Naive thymus-derived CD4-positive, alpha-beta T cell (primary cell): ENCODE measurements at regions of chr10 and their contacts with region 1.

Region 1: GRCh38 chr10:62816331-62817120 is at the start of gene EGR2:
- DNase-seq: peak; percentile 92 to 99 (median 98)
- ATAC-seq: peak; percentile 88
- H3K4me3 ChIP-seq: peak within 1 kb of the TSS; percentile 69
- H3K4me3 Mint-ChIP-seq: peak within 1 kb of the TSS; percentile 89 to 100 (median 98)
- H3K27ac ChIP-seq: peak within 1 kb of the TSS; percentile 76
- H3K27ac Mint-ChIP-seq: peak within 1 kb of the TSS; percentile 86 to 99 (median 95)
- H3K4me1 ChIP-seq: peaks cover 17 to 23% of the 10 kb centered on the region in 2 donors
- H3K4me1 Mint-ChIP-seq: peaks cover 36 to 62% (median 49%) of the 10 kb centered on the region in 7 donors
- H3K27me3 ChIP-seq: peaks cover 3 to 7% of the 10 kb centered on the region in 2 donors
- H3K27me3 Mint-ChIP-seq: peaks cover 26 to 74% (median 31%) of the 10 kb centered on the region in 5 donors
- total RNA-seq, gene EGR2: 0.46 to 14.2 (median 2.7) TPM

Region 2: GRCh38 chr10:61992671-61993668 is 823.6 kb before region 1 on chr10:
- CTCF ChIA-PET with region 1: no interaction called
- POLR2A ChIA-PET with region 1: no interaction called
- intact Hi-C with region 1: loop called in 1 of 2 experiments (anchors 1 kb)
- DNase-seq: peak in 8 of 9 donors; percentile 39 to 85 (median 72)
- ATAC-seq: peak; percentile 90
- H3K4me3 ChIP-seq: peak overlapping the region; percentile 28
- H3K4me3 Mint-ChIP-seq: peak overlapping the region in 9 of 10 donors; percentile 61 to 89 (median 64)
- H3K27ac ChIP-seq: peak overlapping the region; percentile 63
- H3K27ac Mint-ChIP-seq: peak overlapping the region; percentile 82 to 96 (median 93)
- H3K4me1 ChIP-seq: peaks cover 33 to 37% of the 10 kb centered on the region in 2 donors
- H3K4me1 Mint-ChIP-seq: peaks cover 28 to 81% (median 70%) of the 10 kb centered on the region in 7 donors
- H3K27me3 ChIP-seq: no peaks in the 10 kb centered on the region
- H3K27me3 Mint-ChIP-seq: no peaks in the 10 kb centered on the region

Region 3: GRCh38 chr10:62492012-62492869 is 324.3 kb before region 1 on chr10:
- CTCF ChIA-PET with region 1: interaction called, 5 read pairs
- POLR2A ChIA-PET with region 1: interaction called, 7 read pairs
- intact Hi-C with region 1: loop called in 1 of 2 experiments (anchors 1 kb)
- DNase-seq: peak in 7 of 9 donors; percentile 14 to 53 (median 40)
- ATAC-seq: peak; percentile 54
- H3K4me3 ChIP-seq: no peak overlapping the region
- H3K4me3 Mint-ChIP-seq: no peak overlapping the region
- H3K27ac ChIP-seq: no peak overlapping the region
- H3K27ac Mint-ChIP-seq: no peak overlapping the region
- H3K4me1 ChIP-seq: no peaks in the 10 kb centered on the region
- H3K4me1 Mint-ChIP-seq: peaks cover 0 to 2% (median 0%) of the 10 kb centered on the region in 7 donors
- H3K27me3 ChIP-seq: no peaks in the 10 kb centered on the region
- H3K27me3 Mint-ChIP-seq: peaks cover 0 to 29% (median 4%) of the 10 kb centered on the region in 5 donors

Region 4: DNA sequence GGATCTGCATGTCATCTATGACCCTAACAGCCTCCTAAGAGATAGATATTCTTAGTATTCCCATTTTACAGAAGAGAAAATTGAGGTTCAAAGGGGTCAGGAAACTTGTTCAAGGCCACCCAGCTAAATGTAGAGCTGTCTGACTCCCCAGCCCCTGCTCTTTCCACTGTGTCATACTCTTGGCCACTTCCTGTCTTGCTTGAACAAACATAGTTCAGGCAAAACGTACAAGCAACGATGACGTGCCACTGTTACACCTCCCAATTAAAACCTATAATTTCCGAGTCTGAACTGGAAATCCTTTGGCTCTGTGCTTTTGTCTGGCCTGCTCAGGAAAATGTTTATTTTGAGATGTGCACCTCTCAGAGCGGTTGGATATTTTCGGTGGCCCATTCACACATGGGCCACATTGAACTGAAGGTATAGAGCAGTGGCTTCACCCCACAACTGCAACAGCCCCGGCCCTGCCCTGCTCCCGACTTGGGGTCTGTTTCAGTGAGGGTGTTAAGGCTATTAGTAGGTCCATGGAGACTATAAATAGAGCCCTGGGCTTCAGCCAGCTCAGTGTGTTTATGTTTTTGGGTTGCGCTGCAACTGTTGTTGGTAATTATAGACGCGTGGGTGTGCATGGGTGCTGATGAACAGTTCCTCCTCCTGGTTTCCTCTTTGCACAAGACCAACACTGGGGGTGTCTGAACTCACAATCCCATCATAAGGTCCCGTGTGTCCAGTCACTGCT is 184.3 kb before region 1 on chr10:
- CTCF ChIA-PET with region 1: interaction called, 21 read pairs
- POLR2A ChIA-PET with region 1: interaction called, 43 read pairs
- intact Hi-C with region 1: loop called (anchors 1 kb)
- DNase-seq: peak in 8 of 9 donors; percentile 45 to 69 (median 54)
- ATAC-seq: peak; percentile 82
- H3K4me3 ChIP-seq: peak overlapping the region; percentile 19
- H3K4me3 Mint-ChIP-seq: peak overlapping the region in 4 of 10 donors; percentile 19 to 67 (median 45)
- H3K27ac ChIP-seq: no peak overlapping the region
- H3K27ac Mint-ChIP-seq: peak overlapping the region; percentile 3 to 89 (median 54)
- H3K4me1 ChIP-seq: peaks cover 15 to 29% of the 10 kb centered on the region in 2 donors
- H3K4me1 Mint-ChIP-seq: peaks cover 8 to 40% (median 15%) of the 10 kb centered on the region in 7 donors
- H3K27me3 ChIP-seq: no peaks in the 10 kb centered on the region
- H3K27me3 Mint-ChIP-seq: no peaks in the 10 kb centered on the region

Region 5: DNA sequence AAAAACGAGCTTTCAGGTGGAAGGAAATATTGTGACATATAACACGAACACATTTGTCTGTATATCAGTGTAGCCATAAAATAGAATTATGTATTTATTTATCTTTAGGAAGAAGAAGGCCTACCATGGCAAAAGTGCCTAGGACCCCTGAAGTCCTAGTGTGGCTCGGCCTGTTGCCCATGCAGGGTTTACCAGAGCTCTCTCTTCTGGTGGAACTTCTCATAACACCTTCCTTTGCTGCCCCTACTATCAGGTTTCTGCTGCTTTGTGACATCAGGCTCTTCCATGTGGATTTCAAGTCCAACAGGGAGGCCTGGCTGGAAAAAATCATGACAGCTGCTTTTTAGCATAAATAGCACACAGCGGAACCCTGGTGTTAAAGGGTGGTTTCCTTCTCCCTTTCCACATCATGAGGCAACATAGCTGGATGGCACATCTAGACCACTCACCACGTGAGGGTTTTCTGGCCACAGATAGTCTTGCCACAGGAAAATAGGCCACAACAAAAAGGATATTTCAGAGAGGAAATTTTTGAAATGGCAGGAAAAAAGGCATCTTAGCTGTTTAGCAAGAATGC is 56.8 kb before region 1 on chr10:
- CTCF ChIA-PET with region 1: no interaction called
- POLR2A ChIA-PET with region 1: no interaction called
- intact Hi-C with region 1: loop called in 1 of 2 experiments (anchors 1 kb)
- DNase-seq: no peak
- ATAC-seq: peak; percentile 49
- H3K4me3 ChIP-seq: no peak overlapping the region
- H3K4me3 Mint-ChIP-seq: no peak overlapping the region
- H3K27ac ChIP-seq: no peak overlapping the region
- H3K27ac Mint-ChIP-seq: no peak overlapping the region
- H3K4me1 ChIP-seq: peaks cover 15 to 20% of the 10 kb centered on the region in 2 donors
- H3K4me1 Mint-ChIP-seq: peaks cover 17 to 27% (median 20%) of the 10 kb centered on the region in 7 donors
- H3K27me3 ChIP-seq: no peaks in the 10 kb centered on the region
- H3K27me3 Mint-ChIP-seq: peaks cover 0 to 3% (median 0%) of the 10 kb centered on the region in 5 donors

Region 6: DNA sequence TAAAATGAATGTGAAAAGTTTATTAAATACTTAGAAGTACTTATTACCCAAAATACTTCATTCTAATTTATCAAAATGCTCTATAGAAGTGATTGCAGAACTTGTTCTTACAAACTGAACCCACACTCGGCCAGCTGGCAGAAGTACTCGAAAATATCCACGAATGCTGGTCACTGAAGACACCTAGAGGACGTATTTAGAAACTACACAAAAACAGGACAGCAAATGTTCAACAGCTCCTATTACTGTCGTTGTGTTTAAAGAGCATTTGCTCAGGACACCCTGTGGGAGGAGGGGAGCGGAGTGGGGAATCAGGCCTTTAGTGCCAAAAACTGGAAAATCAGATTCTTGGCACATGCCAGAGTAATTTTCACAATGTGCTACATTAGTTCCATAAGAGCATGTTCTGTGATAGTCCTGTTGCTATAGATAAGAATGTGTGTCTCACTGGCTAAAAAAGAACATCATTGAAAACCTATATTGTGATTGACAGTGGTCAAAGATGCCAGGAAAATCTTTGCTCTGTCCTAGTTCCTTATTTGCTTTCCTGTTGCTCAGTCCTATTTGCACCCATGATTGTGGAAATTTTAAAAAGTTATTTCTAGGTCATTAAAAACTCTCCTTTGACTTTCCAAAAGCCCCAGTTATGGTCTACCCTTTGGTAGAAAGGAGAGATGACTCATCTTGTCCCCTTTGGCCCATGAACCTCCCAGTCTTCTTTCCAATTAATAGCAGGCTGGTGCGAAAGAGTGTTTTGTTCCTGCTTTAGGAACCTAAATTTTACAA is 267.6 kb after region 1 on chr10:
- CTCF ChIA-PET with region 1: no interaction called
- POLR2A ChIA-PET with region 1: no interaction called
- intact Hi-C with region 1: loop called (anchors 1 kb)
- DNase-seq: peak in 7 of 9 donors; percentile 20 to 58 (median 43)
- ATAC-seq: peak; percentile 78
- H3K4me3 ChIP-seq: no peak overlapping the region
- H3K4me3 Mint-ChIP-seq: no peak overlapping the region
- H3K27ac ChIP-seq: no peak overlapping the region
- H3K27ac Mint-ChIP-seq: no peak overlapping the region
- H3K4me1 ChIP-seq: no peaks in the 10 kb centered on the region
- H3K4me1 Mint-ChIP-seq: no peaks in the 10 kb centered on the region
- H3K27me3 ChIP-seq: no peaks in the 10 kb centered on the region
- H3K27me3 Mint-ChIP-seq: peaks cover 4 to 31% (median 6%) of the 10 kb centered on the region in 5 donors

Region 7: DNA sequence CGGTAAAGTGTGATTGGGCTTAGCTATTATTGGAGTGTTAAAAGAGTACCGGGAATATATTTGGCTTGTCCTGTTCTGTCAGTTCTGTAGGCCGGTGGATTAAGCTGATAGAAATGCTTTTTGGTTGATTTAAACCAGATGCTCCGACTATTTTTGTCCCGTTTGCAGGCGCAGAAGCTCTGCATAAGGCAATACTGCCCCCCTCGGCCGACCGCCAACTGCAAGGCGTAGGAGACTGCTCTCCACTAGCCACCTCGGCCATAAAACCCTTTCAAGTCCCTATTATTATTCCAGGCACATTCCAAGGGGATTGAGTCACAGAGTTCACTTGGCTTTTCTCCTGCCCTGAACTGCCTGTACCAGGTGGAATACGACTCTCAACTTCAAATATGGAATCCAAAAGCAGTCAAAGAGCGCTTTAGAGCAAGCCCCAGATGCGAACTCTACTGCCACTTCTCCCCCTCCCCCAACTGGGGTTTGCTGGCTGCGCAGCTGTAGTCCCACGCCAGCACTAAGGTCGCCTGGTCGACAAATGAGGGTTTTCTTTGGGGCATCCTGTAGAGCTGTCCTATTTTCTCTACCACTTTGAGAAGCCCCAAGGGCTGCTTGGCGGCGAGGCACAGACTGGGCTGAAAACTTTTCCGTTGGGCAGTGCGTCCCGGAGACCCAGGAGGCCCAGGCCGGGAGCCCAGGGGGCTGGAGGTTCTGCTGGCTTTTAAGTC is 813.0 kb after region 1 on chr10:
- CTCF ChIA-PET with region 1: no interaction called
- POLR2A ChIA-PET with region 1: no interaction called
- intact Hi-C with region 1: loop called (anchors 1 to 2 kb)
- DNase-seq: peak; percentile 61 to 81 (median 78)
- ATAC-seq: peak; percentile 81
- H3K4me3 ChIP-seq: peak overlapping the region; percentile 90
- H3K4me3 Mint-ChIP-seq: peak overlapping the region; percentile 87 to 98 (median 95)
- H3K27ac ChIP-seq: peak overlapping the region; percentile 69
- H3K27ac Mint-ChIP-seq: peak overlapping the region; percentile 79 to 95 (median 90)
- H3K4me1 ChIP-seq: peaks cover 0 to 17% of the 10 kb centered on the region in 2 donors
- H3K4me1 Mint-ChIP-seq: peaks cover 19 to 40% (median 26%) of the 10 kb centered on the region in 7 donors
- H3K27me3 ChIP-seq: no peaks in the 10 kb centered on the region
- H3K27me3 Mint-ChIP-seq: peaks cover 0 to 3% (median 0%) of the 10 kb centered on the region in 5 donors